Dorsolateral prefrontal cortex (tissue), 120 donors: ENCODE measurements at regions of chr19 and their contacts with region 1.

Region 1: DNA sequence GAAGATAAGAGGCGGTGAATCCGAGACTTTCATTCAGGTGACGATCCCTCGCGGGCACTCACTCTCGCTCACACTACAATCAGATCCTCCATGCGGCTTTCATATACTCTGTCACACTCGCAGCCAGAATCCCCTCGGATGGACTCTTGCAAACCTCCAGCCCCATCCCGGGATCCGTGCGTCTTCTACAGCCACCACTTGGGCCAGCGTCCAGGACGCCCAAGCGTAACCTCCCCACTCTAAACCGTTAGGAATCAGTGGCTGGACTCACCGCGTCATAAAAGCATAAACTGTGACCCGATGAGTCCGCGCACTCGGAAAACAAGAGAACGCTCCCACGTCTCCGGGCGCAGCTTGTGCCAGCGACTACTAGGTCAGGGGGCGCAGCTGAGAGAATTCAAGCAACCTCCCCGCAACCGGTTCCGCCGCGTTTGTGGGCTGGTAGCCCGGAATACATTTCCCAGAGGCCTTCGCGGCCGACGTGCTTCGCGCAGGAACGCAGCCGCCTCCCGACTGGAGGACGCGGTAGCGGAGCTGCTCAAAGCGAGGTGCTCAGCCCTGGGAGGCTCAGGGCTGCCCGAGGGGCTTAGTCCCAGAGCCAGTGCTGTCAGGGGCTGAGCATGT is 27.6 kb downstream of the ZNF607 start:
- DNase-seq: peak; percentile 78 to 94 (median 87)
- H3K4me3 ChIP-seq: peak overlapping the region; percentile 57 to 91 (median 77)
- H3K27ac ChIP-seq: peak overlapping the region; percentile 69 to 96 (median 88)
- H3K27me3 ChIP-seq: no peaks in the 10 kb centered on the region
- CTCF ChIP-seq: peak in 52 of 56 donors; percentile 20 to 70 (median 48)

Region 2: GRCh38 chr19:37403403-37403802 is 288.6 kb before region 1 on chr19:
- intact Hi-C with region 1: no loop called
- DNase-seq: no peak
- H3K4me3 ChIP-seq: no peak overlapping the region
- H3K27ac ChIP-seq: no peak overlapping the region
- H3K27me3 ChIP-seq: no peaks in the 10 kb centered on the region
- CTCF ChIP-seq: no peak

Region 3: DNA sequence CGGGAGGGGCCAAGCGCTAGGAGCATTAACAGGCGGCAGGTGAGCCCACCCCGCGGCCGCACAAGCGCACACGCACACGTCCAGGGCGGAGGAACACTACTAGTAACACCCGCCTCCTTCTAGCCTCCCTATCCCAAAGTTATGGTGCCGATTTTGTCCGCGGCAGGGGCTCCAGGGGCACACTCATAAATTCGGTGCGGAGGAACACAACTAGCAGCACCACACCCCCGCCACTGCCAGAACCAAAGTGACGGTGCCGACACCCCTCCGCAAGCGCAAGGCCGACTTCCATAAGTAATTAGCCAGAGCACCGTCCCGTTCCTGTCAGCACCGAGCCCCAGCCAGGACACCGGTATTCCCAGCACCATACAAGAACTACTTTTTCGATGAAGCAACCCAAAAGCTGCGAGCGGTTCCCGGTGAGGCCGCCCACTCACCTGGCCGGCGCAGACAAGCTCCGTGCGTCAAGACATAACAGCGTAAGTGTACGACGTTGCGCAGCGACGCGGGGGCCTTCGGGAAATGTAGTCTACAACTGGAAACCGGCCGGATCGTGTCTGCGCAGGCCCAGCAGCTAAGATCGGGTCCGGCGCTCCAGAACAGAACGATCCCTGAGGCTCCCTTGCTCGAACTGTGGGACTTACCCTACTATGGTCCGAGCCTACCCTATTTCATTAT is 97.5 kb before region 1 on chr19 and contains the starts of genes ZNF540 and ZNF571:
- intact Hi-C with region 1: loop called (anchors 10 kb)
- DNase-seq: peak; percentile 92 to 97 (median 95)
- H3K4me3 ChIP-seq: peak within 1 kb of the TSS; percentile 61 to 98 (median 85)
- H3K27ac ChIP-seq: peak within 1 kb of the TSS; percentile 73 to 98 (median 94)
- H3K27me3 ChIP-seq: no peaks in the 10 kb centered on the region
- CTCF ChIP-seq: peak in 16 of 56 donors; percentile 3 to 36 (median 14)
- total RNA-seq, gene ZNF540: 15.8 to 44.6 (median 29.0) TPM
- total RNA-seq, gene ZNF571: 6.7 to 27.7 (median 12.5) TPM

Region 4: DNA sequence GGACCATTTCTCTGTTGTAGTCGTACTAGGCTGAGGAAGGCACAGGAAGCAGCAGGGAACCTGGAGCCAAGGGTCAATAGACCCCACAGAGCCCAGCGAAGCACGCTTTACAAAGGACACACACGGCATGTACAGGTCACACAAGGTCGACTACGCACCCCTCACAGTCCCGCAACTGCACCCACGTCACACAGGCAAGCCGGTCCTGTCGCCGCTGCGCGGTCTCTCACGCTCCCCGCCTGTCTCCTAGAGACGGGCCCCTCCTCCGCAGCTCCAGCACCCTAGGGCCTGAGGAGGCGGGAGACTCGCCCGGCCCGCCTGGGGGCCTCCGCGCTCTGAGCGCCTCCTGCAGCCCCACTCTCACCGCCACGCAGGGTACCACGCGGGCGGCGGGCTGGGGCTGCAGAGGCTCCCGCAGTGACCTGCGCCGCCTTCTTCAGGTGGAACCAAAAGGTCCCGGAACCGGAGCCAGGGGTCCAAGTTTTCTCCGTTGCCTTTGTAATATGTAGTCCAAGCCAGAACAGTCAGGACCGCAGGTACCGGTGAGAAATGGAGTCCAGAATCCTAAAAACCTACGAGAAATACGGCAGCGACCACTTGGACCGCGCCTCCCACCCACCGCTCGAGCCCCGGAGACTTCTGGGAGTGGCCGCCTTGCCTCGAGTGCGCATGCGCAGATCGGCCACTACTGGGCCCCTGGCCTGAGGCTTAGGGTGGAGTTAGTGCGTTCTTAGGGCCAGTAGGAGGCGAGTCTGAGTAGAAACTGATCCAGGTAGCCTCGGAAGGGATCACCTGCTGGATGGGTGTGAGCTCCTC is 27.3 kb after region 1 on chr19 and contains the start of gene ZNF607:
- intact Hi-C with region 1: loop called in 1 of 2 experiments (anchors 1 kb)
- DNase-seq: peak; percentile 84 to 92 (median 88)
- H3K4me3 ChIP-seq: peak within 1 kb of the TSS; percentile 70 to 99 (median 91)
- H3K27ac ChIP-seq: peak within 1 kb of the TSS in 58 of 59 donors; percentile 30 to 95 (median 91)
- H3K27me3 ChIP-seq: no peaks in the 10 kb centered on the region
- CTCF ChIP-seq: peak; percentile 28 to 82 (median 68)
- total RNA-seq, gene ZNF607: 9.2 to 27.3 (median 16.7) TPM

Region 5: DNA sequence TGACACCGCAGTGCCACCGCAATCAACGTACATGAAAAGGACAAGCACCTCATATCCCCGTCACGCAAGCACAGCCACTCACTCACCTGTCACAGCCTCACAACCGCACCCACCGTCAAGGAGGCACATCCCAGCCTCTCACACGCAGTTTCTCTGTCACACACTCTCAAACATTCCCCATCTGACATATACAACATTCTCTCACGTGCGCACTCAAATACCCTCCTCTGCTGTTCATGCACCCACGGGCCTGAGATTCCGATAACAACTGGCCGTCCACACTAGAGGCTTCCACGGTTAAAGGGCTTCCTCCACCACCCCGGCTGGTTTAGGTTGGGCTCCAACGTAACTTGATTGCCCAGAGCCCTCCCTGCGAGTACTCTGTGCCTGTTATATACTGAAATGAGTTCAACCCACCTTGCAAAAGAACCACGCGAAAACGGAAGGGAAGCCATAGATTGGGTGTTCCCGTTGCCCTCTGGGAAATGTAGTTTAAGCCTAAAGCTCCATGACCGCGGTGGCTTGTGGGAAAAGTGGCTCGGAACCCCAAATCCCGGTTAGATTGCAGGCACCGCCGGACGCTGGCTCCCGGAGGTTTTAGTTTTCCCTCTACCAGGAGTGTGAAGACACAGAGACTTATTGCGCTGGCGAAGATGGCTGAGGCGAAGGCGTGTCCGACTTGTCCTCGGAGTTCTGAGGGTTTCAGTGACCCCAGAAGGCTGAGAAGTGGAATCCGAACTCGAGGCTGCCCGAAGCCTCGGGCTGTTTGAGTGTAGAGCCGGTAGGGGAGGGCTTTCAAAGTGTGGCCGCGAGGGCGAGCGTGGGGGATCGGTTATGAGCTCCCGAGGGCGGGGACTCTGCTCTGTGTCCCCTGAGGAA is 87.4 kb after region 1 on chr19 and contains the start of gene ZNF573:
- intact Hi-C with region 1: loop called (anchors 1 to 10 kb)
- DNase-seq: peak; percentile 84 to 92 (median 90)
- H3K4me3 ChIP-seq: peak within 1 kb of the TSS; percentile 41 to 98 (median 83)
- H3K27ac ChIP-seq: peak within 1 kb of the TSS; percentile 48 to 95 (median 86)
- H3K27me3 ChIP-seq: no peaks in the 10 kb centered on the region
- CTCF ChIP-seq: peak in 32 of 56 donors; percentile 3 to 50 (median 29)
- total RNA-seq, gene ZNF573: 15.2 to 40.0 (median 24.8) TPM